Colonic mucosa (tissue), 4 donors: ENCODE measurements at regions of chr12 and their contacts with region 1.

Region 1: GRCh38 chr12:121811434-121812319 is 7.9 kb downstream of the SETD1B start:
- DNase-seq: peak; percentile 73
- H3K4me3 ChIP-seq: peak overlapping the region; percentile 70
- H3K27ac ChIP-seq: peak overlapping the region; percentile 37
- H3K4me1 ChIP-seq: peaks cover 18% of the 10 kb centered on the region
- H3K27me3 ChIP-seq: no peaks in the 10 kb centered on the region
- CTCF ChIP-seq: peak; percentile 99

Region 2: DNA sequence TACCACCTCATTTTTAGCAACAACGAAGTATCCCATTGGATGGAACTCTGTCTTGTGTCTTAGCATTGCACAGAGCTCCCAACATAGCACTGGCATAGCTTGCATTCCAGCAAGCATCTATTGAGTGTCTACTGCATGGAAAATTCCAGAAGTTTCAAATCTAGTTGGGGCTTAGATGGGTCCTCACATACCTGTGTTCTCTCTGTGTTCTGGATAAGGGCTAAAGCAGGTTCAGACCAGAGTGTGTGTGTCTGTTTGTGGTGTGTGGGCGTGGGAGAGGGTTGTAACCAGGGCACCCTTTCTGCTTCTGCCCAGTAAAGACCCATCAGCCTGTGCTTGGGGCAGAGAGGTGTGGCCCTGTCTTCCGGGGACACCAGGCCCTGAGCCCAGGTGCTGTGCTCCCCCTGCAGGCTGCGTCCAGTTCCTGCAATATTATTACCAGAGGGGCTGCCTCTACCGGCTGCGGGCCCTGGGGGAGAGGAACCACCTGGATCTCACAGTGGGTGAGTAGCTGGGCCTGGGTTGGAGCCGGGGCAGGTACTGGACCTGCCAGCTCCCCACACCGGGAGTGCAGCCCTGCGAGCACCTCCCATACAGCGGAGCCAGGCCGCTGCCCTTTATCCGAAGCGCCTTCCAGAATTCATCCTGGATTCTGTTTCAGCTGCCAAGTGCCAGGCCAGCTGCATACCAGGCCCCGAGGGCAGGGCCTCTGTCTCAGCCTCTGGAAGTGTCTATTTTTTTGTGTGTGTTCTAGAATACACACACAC is 38.5 kb before region 1 on chr12:
- intact Hi-C with region 1: loop called (anchors 5 kb)
- DNase-seq: peak; percentile 76
- H3K4me3 ChIP-seq: no peak overlapping the region
- H3K27ac ChIP-seq: no peak overlapping the region
- H3K4me1 ChIP-seq: peaks cover 4% of the 10 kb centered on the region
- H3K27me3 ChIP-seq: no peaks in the 10 kb centered on the region
- CTCF ChIP-seq: peak; percentile 85

Region 3: GRCh38 chr12:121793838-121794533 is 17.7 kb before region 1 on chr12:
- intact Hi-C with region 1: loop called (anchors 2 kb)
- DNase-seq: peak; percentile 95
- H3K4me3 ChIP-seq: peak overlapping the region; percentile 70
- H3K27ac ChIP-seq: peak overlapping the region; percentile 78
- H3K4me1 ChIP-seq: peaks cover 38% of the 10 kb centered on the region
- H3K27me3 ChIP-seq: no peaks in the 10 kb centered on the region
- CTCF ChIP-seq: peak; percentile 99

Region 4: DNA sequence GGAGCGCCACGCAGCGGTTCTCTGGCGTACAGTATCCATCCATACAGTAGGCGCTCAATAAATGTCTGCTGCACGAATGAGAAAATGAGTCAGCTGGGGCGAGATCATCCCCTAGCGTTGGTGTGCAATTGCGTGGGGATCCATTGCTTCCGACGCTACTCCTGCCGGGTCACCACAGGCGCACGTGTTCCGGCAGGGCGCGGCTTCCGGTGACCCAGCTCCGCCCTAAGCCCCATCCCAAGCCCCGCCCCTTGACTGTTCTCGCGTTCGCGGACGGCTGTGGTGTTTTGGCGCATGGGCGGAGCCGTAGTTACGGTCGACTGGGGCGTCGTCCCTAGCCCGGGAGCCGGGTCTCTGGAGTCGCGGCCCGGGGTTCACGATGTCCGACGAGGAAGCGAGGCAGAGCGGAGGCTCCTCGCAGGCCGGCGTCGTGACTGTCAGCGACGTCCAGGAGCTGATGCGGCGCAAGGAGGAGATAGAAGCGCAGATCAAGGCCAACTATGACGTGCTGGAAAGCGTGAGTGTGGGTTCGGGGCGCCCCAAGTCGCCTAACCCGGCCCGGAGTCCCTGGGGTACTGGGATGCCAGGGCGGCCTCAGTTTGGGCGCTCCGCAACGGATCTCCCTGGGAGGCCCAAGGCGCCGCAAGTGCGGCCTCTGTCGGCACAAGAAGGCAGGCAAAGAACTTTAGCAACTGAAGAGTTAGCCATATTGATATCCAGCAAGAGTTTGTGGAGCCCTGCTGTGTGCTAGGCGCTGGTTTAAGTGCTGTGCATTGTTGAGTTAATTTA is 77.0 kb after region 1 on chr12 and contains the start of gene PSMD9:
- intact Hi-C with region 1: loop called (anchors 2 kb)
- DNase-seq: peak; percentile 99
- H3K4me3 ChIP-seq: peak within 1 kb of the TSS; percentile 91
- H3K27ac ChIP-seq: peak within 1 kb of the TSS; percentile 98
- H3K4me1 ChIP-seq: peaks cover 4% of the 10 kb centered on the region
- H3K27me3 ChIP-seq: no peaks in the 10 kb centered on the region
- CTCF ChIP-seq: peak; percentile 48
- total RNA-seq, gene PSMD9: 46.1 to 68.3 TPM